ENCODE measurements at regions of chr3 and their contacts with region 1.

Region 1: GRCh38 chr3:52444860-52445793 is at the start of gene SEMA3G:
- DNase-seq: peak; percentile 57 to 66
- H3K4me3 ChIP-seq: no peak within 1 kb of the TSS
- H3K4me3 Mint-ChIP-seq: no peak within 1 kb of the TSS
- H3K27ac Mint-ChIP-seq: no peak within 1 kb of the TSS
- H3K4me1 ChIP-seq: peaks cover 11% of the 10 kb centered on the region
- H3K4me1 Mint-ChIP-seq: peaks cover 7% of the 10 kb centered on the region
- H3K27me3 ChIP-seq: no peaks in the 10 kb centered on the region
- H3K27me3 Mint-ChIP-seq: no peaks in the 10 kb centered on the region
- CTCF ChIP-seq: peak; percentile 17 to 26
- total RNA-seq, gene SEMA3G: 0.28 and 0.32 TPM in 2 replicates

Region 2: DNA sequence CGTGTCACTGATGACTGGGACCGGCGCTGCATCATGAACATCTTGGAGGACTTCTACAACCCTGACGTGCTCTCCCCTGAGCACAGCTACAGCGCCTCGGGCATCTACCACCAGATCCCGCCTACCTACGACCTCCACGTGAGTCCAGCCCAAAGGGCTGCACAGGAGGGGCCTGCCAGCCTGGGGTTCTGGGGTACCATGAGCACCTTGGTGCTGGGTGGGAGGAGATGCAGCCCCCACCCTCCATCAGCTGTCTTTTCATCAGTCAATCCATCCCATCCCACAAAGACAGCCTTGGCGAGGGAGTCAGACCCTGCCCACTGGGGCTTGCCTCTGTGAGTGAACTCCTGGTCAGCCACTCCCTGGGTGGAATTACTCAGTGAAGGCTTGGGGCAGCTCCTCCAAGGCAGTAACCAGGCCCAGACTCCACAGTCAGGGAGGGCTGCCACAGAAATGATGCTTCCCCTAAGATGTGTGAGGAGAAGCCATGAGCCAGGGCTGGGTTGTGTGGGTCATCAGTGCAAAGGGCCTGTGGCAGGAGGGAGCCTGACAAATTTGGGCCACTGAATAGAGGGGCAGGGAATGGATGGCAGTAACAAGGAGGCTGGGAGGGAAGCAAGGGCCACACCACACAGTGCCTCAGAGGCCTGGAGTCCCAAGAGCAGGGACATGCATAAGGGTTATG is 48.1 kb before region 1 on chr3:
- CTCF ChIA-PET with region 1: no interaction called
- POLR2A ChIA-PET with region 1: no interaction called
- intact Hi-C with region 1: no loop called
- DNase-seq: no peak
- H3K4me3 ChIP-seq: no peak overlapping the region
- H3K4me3 Mint-ChIP-seq: no peak overlapping the region
- H3K27ac Mint-ChIP-seq: no peak overlapping the region
- H3K4me1 ChIP-seq: no peaks in the 10 kb centered on the region
- H3K4me1 Mint-ChIP-seq: no peaks in the 10 kb centered on the region
- H3K27me3 ChIP-seq: no peaks in the 10 kb centered on the region
- H3K27me3 Mint-ChIP-seq: no peaks in the 10 kb centered on the region
- CTCF ChIP-seq: no peak

Region 3: DNA sequence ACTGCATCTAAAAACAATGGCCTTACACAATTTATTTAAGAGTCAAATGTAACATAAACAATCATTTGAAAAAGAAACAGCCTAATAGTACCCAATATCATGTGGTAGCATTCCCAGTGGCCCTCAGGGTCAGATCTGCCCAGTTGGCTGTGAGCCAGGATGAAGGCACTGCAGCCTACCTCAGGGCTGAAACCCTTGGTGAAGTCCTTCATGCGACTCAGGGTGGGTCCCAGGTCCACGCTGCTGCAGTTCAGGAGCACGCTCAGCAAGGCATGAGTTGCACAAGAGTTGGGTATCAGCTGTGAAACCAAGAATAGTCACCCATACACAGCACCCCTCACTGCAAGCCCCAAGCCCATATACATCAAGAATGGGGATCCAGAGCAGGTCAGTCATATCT is 37.3 kb before region 1 on chr3:
- CTCF ChIA-PET with region 1: interaction called, 29 read pairs
- POLR2A ChIA-PET with region 1: no interaction called
- intact Hi-C with region 1: loop called (anchors 1 kb)
- DNase-seq: no peak
- H3K4me3 ChIP-seq: no peak overlapping the region
- H3K4me3 Mint-ChIP-seq: no peak overlapping the region
- H3K27ac Mint-ChIP-seq: no peak overlapping the region
- H3K4me1 ChIP-seq: peaks cover 8% of the 10 kb centered on the region
- H3K4me1 Mint-ChIP-seq: peaks cover 13% of the 10 kb centered on the region
- H3K27me3 ChIP-seq: no peaks in the 10 kb centered on the region
- H3K27me3 Mint-ChIP-seq: no peaks in the 10 kb centered on the region
- CTCF ChIP-seq: no peak

Measured in Caco-2 (cell line).